Activated CD4-positive, alpha-beta T cell treated with anti-CD3 and anti-CD28 coated beads, Interleukin-2, amount 10 ng/mL, durations not matched to agents 7 days and 5 days (primary cell): ENCODE measurements at regions of chr1 and their contacts with region 1.

Region 1: DNA sequence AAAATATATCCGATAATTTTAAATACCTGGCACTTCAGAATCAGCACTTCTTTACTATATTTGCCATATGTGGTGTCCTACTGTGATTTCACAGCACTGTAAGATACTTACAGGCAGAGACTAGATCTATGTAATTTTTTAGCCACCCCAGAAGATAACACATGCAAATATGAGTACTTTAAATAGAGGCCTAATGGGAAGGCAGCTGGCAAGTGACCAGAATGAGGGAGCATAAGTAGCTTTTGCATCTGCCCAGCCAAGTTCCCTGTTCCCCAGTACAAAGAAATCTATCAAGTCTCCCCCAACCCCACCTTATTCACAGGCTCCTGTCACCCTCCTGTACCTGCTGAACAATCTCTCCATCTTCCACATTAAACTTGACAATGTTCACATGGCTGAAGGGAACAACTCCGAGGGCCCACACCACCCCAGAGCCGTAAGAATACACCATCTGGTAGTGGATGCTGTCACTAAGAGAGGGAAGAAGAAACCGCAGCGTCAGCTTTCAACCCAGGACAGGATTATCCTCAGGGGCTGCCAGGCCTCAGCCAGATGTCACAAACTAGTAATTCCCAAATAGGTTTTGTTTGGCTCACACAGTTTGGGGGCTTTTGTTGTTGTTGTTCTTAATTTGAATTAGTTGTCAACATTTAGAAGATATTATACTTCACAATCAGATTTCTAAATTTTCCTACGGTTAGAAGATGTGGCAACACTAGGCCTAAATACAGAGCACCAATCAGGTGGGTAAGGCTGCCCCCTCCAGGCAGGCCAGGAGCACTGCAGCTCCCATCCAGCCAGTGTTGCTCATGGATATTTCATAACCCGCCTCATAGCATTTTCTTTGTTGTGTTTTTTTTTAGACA is 10.4 kb downstream of the EMC1 start:
- DNase-seq: peak; percentile 77
- H3K4me3 Mint-ChIP-seq: no peak overlapping the region
- H3K27ac Mint-ChIP-seq: peak overlapping the region; percentile 54
- H3K4me1 Mint-ChIP-seq: no peaks in the 10 kb centered on the region
- H3K27me3 Mint-ChIP-seq: no peaks in the 10 kb centered on the region

Region 2: GRCh38 chr1:19251305-19252196 is 10.6 kb after region 1 on chr1 and contains the starts of genes EMC1 and MRTO4:
- CTCF ChIA-PET with region 1: interaction called, 14 read pairs
- POLR2A ChIA-PET with region 1: no interaction called
- DNase-seq: peak; percentile 89
- H3K4me3 Mint-ChIP-seq: peak within 1 kb of the TSS; percentile 98
- H3K27ac Mint-ChIP-seq: peak within 1 kb of the TSS; percentile 97
- H3K4me1 Mint-ChIP-seq: peaks cover 37% of the 10 kb centered on the region
- H3K27me3 Mint-ChIP-seq: no peaks in the 10 kb centered on the region
- total RNA-seq, gene EMC1: 36.4 to 37.0 TPM
- total RNA-seq, gene MRTO4: 27.2 to 32.5 TPM

Region 3: DNA sequence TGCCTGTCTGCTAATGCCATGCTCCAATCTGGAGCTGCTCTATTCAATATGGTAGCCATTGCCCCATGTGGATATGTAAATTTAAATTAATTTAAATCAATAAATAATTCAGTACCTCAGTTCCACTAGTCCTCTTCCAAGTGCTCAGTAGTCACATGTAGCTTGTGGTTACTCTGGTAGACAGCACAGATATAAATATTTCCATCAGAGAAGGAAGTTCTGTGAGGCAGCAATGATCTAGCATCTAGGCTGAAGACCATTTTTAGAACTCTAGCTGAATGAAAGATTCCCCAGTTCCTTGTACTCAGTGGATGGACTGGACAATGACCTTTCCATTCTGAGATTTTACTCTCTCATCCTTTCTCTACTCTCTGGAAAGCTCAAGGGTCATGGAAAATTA is 270.2 kb after region 1 on chr1:
- CTCF ChIA-PET with region 1: interaction called, 12 read pairs
- POLR2A ChIA-PET with region 1: no interaction called
- DNase-seq: no peak
- H3K4me3 Mint-ChIP-seq: no peak overlapping the region
- H3K27ac Mint-ChIP-seq: no peak overlapping the region
- H3K4me1 Mint-ChIP-seq: peaks cover 16% of the 10 kb centered on the region
- H3K27me3 Mint-ChIP-seq: no peaks in the 10 kb centered on the region